GM10248 (cell line): ENCODE measurements at regions of chr10 and their contacts with region 1.

Region 1: DNA sequence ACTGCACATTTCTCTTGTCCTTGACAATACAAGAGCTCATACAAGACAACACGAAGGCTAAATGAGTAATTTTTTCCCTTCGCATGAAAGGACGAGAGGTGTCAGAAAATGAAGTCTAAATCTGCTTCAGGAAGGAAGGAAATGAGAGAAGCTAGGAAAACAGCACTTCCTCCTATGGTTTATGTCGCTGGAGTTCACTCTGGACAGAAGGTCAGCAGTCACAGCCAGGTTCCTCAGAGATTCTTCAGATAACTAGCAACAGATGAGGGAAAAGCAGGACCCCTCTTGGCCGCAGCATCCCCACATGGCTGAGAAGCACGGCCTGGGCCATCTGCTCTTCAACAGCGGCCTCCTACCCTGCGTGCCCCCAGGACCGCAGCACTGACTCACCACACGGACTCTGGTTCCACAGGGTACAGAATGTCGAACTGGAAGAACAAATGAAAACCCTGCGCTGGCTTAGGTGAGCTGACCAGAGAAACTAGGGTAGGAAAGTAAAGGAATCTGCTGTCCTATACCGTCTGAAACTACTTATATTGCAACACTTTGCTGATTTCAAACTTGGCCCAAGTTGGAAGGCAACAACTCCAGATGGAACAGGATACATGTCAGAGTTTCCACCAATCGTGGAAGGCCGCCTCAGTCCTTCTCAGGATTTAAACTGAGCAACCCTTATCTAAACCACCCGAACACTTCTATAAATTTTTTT is 26.3 kb downstream of the DNMBP start:
- DNase-seq: no peak
- CTCF ChIP-seq: no peak

Region 2: GRCh38 chr10:99605349-99605748 is 378.1 kb before region 1 on chr10:
- CTCF ChIA-PET with region 1: no interaction called
- POLR2A ChIA-PET with region 1: no interaction called
- DNase-seq: no peak
- CTCF ChIP-seq: no peak

Region 3: GRCh38 chr10:99993701-99994689 is 10.6 kb after region 1 on chr10:
- CTCF ChIA-PET with region 1: interaction called, 10 read pairs
- POLR2A ChIA-PET with region 1: interaction called, 3 read pairs
- DNase-seq: peak; percentile 76
- CTCF ChIP-seq: no peak